PC-3 (cell line): ENCODE measurements at regions of chr20 and their contacts with region 1.

Region 1: GRCh38 chr20:45592574-45593189 is 13.6 kb upstream of the WFDC8 start:
- DNase-seq: peak; percentile 90
- ATAC-seq: peak; percentile 83
- H3K4me3 ChIP-seq: no peak overlapping the region
- H3K27ac ChIP-seq: no peak overlapping the region
- H3K4me1 ChIP-seq: no peaks in the 10 kb centered on the region
- H3K27me3 ChIP-seq: peaks cover 16% of the 10 kb centered on the region; the same call in 1 of the 2 replicates
- CTCF ChIP-seq: peak; percentile 97

Region 2: GRCh38 chr20:45545754-45546453 is 46.8 kb before region 1 on chr20:
- CTCF ChIA-PET with region 1: no interaction called
- POLR2A ChIA-PET with region 1: no interaction called
- intact Hi-C with region 1: loop called (anchors 1 kb)
- DNase-seq: peak; percentile 67
- ATAC-seq: peak; percentile 86
- H3K4me3 ChIP-seq: no peak overlapping the region
- H3K27ac ChIP-seq: no peak overlapping the region
- H3K4me1 ChIP-seq: no peaks in the 10 kb centered on the region
- H3K27me3 ChIP-seq: peaks cover 46% of the 10 kb centered on the region
- CTCF ChIP-seq: peak; percentile 76

Region 3: GRCh38 chr20:45963059-45964005 is 370.6 kb after region 1 on chr20:
- CTCF ChIA-PET with region 1: no interaction called
- POLR2A ChIA-PET with region 1: no interaction called
- intact Hi-C with region 1: loop called (anchors 1 kb)
- DNase-seq: peak; percentile 76
- ATAC-seq: peak; percentile 76
- H3K4me3 ChIP-seq: no peak overlapping the region
- H3K27ac ChIP-seq: no peak overlapping the region
- H3K4me1 ChIP-seq: no peaks in the 10 kb centered on the region
- H3K27me3 ChIP-seq: no peaks in the 10 kb centered on the region
- CTCF ChIP-seq: peak; percentile 54